ENCODE measurements at regions of chr4 and their contacts with region 1.

Region 1: DNA sequence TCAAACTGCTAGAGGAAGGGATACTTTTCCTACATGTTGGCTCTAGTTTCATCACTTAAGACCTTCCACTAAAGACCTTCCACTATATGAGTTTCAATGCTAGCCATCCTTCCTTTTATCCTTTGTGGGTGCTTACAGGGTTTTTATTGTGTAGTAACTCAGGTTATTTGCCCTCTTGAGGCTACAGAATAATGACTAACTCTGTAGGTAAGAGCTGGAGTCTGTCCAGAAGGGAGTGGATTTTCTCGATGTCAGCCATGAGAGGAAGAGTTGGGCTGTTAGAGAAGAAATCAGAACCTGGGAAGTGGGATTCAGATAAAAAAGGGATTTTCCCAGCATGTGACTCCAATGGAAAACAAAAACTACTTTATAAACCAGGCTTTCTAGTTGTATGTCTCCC is 27.5 kb upstream of the HERC5 start:
- DNase-seq: no peak

Region 2: GRCh38 chr4:88185906-88186305 is 243.5 kb before region 1 on chr4:
- intact Hi-C with region 1: no loop called
- DNase-seq: no peak

Region 3: DNA sequence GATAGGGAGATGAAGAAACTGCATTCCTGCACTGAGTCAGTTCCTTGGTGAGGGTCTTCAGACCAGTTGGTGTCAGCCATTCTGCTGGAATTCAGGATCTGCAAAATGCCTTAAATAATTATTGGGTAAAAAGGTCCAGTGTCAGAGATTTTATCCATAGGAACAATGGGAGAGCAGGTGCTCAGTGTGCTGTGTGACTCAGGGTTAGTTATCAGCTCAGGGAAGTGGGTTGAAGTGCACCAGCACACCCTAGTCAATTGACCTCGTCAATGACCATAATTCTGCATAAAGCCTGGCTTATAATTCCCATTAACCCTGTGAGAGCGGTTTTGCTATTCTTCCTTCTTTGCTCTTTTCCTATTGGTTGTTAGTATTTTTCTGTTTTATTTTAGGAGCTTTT is 13.4 kb before region 1 on chr4:
- intact Hi-C with region 1: loop called (anchors 2 kb)
- DNase-seq: no peak